MCF 10A (cell line): ENCODE measurements at regions of chr2 and their contacts with region 1.

Region 1: GRCh38 chr2:227862227-227862740 is 9.1 kb upstream of the DAW1 start:
- DNase-seq: peak; percentile 80
- H3K4me3 Mint-ChIP-seq: peak overlapping the region; percentile 36
- H3K27ac Mint-ChIP-seq: peak overlapping the region; percentile 24
- H3K4me1 Mint-ChIP-seq: peaks cover 44% of the 10 kb centered on the region
- H3K27me3 Mint-ChIP-seq: no peaks in the 10 kb centered on the region
- CTCF ChIP-seq: peak; percentile 64

Region 2: GRCh38 chr2:226139759-226140158 is 1722.5 kb before region 1 on chr2:
- CTCF ChIA-PET with region 1: no interaction called
- POLR2A ChIA-PET with region 1: no interaction called
- intact Hi-C with region 1: no loop called
- DNase-seq: no peak
- H3K4me3 Mint-ChIP-seq: no peak overlapping the region
- H3K27ac Mint-ChIP-seq: no peak overlapping the region
- H3K4me1 Mint-ChIP-seq: peaks cover 9% of the 10 kb centered on the region
- H3K27me3 Mint-ChIP-seq: no peaks in the 10 kb centered on the region
- CTCF ChIP-seq: no peak

Region 3: GRCh38 chr2:227728035-227728434 is 134.2 kb before region 1 on chr2 and contains the start of gene SCYGR7:
- CTCF ChIA-PET with region 1: no interaction called
- POLR2A ChIA-PET with region 1: no interaction called
- intact Hi-C with region 1: no loop called
- DNase-seq: no peak
- H3K4me3 Mint-ChIP-seq: no peak within 1 kb of the TSS
- H3K27ac Mint-ChIP-seq: no peak within 1 kb of the TSS
- H3K4me1 Mint-ChIP-seq: no peaks in the 10 kb centered on the region
- H3K27me3 Mint-ChIP-seq: no peaks in the 10 kb centered on the region
- CTCF ChIP-seq: no peak
- total RNA-seq, gene SCYGR7: not detected in 2 replicates

Region 4: GRCh38 chr2:227796045-227796711 is 66.1 kb before region 1 on chr2:
- CTCF ChIA-PET with region 1: interaction called, 7 read pairs
- POLR2A ChIA-PET with region 1: interaction called, 13 read pairs
- intact Hi-C with region 1: no loop called
- DNase-seq: peak; percentile 78
- H3K4me3 Mint-ChIP-seq: peak overlapping the region; percentile 28
- H3K27ac Mint-ChIP-seq: peak overlapping the region; percentile 64
- H3K4me1 Mint-ChIP-seq: peaks cover 8% of the 10 kb centered on the region
- H3K27me3 Mint-ChIP-seq: no peaks in the 10 kb centered on the region
- CTCF ChIP-seq: no peak

Region 5: DNA sequence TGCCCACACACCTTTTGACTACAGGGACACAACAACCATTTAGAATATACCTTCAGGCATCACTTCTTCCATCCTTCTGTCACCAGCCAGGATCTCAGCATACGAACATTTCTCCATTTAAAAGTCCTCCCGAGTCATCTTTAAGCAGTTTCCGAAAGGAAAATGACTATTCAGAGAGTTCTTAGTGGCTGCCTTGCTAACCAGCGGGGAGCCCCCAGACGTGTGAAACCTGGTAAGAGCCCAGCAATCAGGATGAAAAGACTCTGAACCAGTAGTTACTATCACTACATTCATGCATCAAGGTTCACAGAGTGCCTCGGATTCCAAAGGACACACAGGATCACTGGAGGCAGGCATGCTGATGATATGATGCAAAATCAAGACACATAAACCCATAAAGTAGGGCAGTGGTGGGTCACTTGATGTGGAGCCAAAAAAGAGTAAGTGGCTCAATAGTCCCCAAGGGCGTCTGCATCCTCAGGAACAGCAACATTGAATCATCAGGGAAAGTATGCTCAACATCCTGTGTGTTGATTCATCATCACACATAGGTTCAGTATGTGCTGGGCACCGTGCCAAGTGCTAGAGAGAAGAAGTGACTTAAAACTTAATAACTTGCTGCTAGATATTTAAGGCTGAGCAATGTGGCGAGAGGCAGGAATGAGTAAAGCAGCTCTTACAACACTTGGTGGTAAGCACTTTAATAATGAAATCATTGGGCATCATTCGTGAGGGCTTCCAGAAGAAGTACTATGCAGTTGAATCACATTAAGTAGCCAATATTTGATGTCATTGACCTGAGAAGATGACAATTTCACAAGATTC is 44.2 kb before region 1 on chr2:
- CTCF ChIA-PET with region 1: interaction called, 16 read pairs
- POLR2A ChIA-PET with region 1: interaction called, 75 read pairs
- intact Hi-C with region 1: loop called (anchors 1 kb)
- DNase-seq: peak; percentile 100
- H3K4me3 Mint-ChIP-seq: peak overlapping the region; percentile 80
- H3K27ac Mint-ChIP-seq: peak overlapping the region; percentile 92
- H3K4me1 Mint-ChIP-seq: peaks cover 46% of the 10 kb centered on the region
- H3K27me3 Mint-ChIP-seq: no peaks in the 10 kb centered on the region
- CTCF ChIP-seq: no peak

Region 6: GRCh38 chr2:227848586-227848985 is 13.7 kb before region 1 on chr2:
- CTCF ChIA-PET with region 1: interaction called, 16 read pairs
- POLR2A ChIA-PET with region 1: interaction called, 14 read pairs
- intact Hi-C with region 1: no loop called
- DNase-seq: no peak
- H3K4me3 Mint-ChIP-seq: no peak overlapping the region
- H3K27ac Mint-ChIP-seq: no peak overlapping the region
- H3K4me1 Mint-ChIP-seq: peaks cover 31% of the 10 kb centered on the region
- H3K27me3 Mint-ChIP-seq: no peaks in the 10 kb centered on the region
- CTCF ChIP-seq: no peak

Region 7: DNA sequence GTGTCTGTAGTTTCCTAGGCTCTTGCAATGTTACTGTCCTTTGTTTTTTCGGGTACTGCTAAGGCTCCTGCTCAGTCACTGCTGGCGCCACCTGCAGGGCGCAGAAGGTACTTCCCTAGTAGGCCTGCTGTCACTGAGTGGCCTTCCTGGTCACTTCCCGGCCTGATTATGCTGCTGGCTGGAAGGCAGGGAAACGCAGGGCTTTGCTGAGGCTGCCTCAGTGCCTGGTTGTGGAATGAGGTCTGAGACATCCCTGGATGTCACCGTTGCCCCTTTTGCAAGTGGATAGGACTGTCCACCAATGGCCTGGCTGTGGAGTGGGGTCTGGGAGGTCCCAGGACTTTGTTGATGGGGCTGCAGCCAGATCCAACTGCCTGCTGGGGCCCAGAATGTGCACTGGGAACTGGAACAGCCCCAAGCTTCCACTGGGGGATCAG is 22.2 kb after region 1 on chr2:
- CTCF ChIA-PET with region 1: interaction called, 30 read pairs
- POLR2A ChIA-PET with region 1: interaction called, 10 read pairs
- intact Hi-C with region 1: loop called (anchors 1 kb)
- DNase-seq: peak; percentile 76
- H3K4me3 Mint-ChIP-seq: no peak overlapping the region
- H3K27ac Mint-ChIP-seq: peak overlapping the region; percentile 46
- H3K4me1 Mint-ChIP-seq: peaks cover 22% of the 10 kb centered on the region
- H3K27me3 Mint-ChIP-seq: no peaks in the 10 kb centered on the region
- CTCF ChIP-seq: peak; percentile 74

Region 8: GRCh38 chr2:227890495-227891079 is 28.3 kb after region 1 on chr2:
- CTCF ChIA-PET with region 1: interaction called, 30 read pairs
- POLR2A ChIA-PET with region 1: interaction called, 10 read pairs
- intact Hi-C with region 1: no loop called
- DNase-seq: peak; percentile 77
- H3K4me3 Mint-ChIP-seq: no peak overlapping the region
- H3K27ac Mint-ChIP-seq: no peak overlapping the region
- H3K4me1 Mint-ChIP-seq: peaks cover 13% of the 10 kb centered on the region
- H3K27me3 Mint-ChIP-seq: no peaks in the 10 kb centered on the region
- CTCF ChIP-seq: peak; percentile 40

Region 9: GRCh38 chr2:227908261-227909054 is 46.2 kb after region 1 on chr2:
- CTCF ChIA-PET with region 1: no interaction called
- POLR2A ChIA-PET with region 1: no interaction called
- intact Hi-C with region 1: no loop called
- DNase-seq: no peak
- H3K4me3 Mint-ChIP-seq: no peak overlapping the region
- H3K27ac Mint-ChIP-seq: no peak overlapping the region
- H3K4me1 Mint-ChIP-seq: peaks cover 5% of the 10 kb centered on the region
- H3K27me3 Mint-ChIP-seq: no peaks in the 10 kb centered on the region
- CTCF ChIP-seq: no peak